ENCODE measurements at regions of chr20 and their contacts with region 1.

Region 1: GRCh38 chr20:11807066-11808048 is 110.3 kb upstream of the BTBD3 start:
- DNase-seq: peak; percentile 83
- H3K4me3 ChIP-seq: no peak overlapping the region
- H3K27me3 ChIP-seq: no peaks in the 10 kb centered on the region
- CTCF ChIP-seq: no peak

Region 2: GRCh38 chr20:13469262-13469661 is 1661.9 kb after region 1 on chr20:
- CTCF ChIA-PET with region 1: no interaction called
- POLR2A ChIA-PET with region 1: interaction called, 10 read pairs
- DNase-seq: no peak
- H3K4me3 ChIP-seq: no peak overlapping the region
- H3K27me3 ChIP-seq: no peaks in the 10 kb centered on the region
- CTCF ChIP-seq: no peak